Heart left ventricle (tissue), 16 donors: ENCODE measurements at regions of chr22 and their contacts with region 1.

Region 1: DNA sequence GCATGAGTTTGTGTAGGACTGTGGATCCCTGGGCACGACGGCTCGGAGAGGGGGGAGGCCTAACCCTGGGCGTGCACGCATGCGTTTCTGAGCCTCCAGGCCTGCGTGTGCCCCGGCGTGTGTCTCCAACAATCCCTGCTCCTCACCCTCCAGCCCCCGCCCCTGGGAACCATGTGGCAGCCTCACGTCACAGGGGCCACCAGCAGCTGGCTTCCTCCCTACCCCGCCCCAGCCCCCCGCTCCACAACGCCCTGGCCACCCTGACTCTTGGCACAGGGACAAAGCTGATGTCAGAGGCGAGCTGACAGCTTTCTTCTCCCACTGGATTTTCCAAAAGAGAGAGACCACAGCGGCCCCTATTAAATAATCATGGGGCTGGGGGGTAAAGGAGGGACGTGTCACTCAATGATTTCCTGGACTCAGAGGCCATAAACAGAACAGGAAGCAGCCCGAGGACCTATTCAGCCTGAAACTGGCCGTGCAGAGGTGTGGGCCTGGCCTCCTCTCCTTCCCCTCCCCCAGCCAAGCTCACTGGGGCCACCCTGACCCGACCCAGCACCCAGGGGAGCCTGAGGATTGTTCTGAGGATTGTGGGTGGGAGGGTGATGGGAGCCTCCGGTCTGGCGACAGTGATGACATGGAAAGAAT is 6.8 kb upstream of the LIF start:
- DNase-seq: peak; percentile 71 to 88 (median 81)
- ATAC-seq: peak in 3 of 4 donors; percentile 9 to 57 (median 44)
- H3K4me3 ChIP-seq: peak overlapping the region in 1 of 12 donors; percentile 2
- H3K27ac ChIP-seq: peak overlapping the region in 6 of 12 donors; percentile 10 to 70 (median 39)
- H3K4me1 ChIP-seq: peaks cover 0 to 52% (median 17%) of the 10 kb centered on the region in 12 donors
- H3K27me3 ChIP-seq: peaks cover 0 to 20% (median 4%) of the 10 kb centered on the region in 9 donors
- CTCF ChIP-seq: no peak
- POLR2A ChIP-seq: no peak

Region 2: DNA sequence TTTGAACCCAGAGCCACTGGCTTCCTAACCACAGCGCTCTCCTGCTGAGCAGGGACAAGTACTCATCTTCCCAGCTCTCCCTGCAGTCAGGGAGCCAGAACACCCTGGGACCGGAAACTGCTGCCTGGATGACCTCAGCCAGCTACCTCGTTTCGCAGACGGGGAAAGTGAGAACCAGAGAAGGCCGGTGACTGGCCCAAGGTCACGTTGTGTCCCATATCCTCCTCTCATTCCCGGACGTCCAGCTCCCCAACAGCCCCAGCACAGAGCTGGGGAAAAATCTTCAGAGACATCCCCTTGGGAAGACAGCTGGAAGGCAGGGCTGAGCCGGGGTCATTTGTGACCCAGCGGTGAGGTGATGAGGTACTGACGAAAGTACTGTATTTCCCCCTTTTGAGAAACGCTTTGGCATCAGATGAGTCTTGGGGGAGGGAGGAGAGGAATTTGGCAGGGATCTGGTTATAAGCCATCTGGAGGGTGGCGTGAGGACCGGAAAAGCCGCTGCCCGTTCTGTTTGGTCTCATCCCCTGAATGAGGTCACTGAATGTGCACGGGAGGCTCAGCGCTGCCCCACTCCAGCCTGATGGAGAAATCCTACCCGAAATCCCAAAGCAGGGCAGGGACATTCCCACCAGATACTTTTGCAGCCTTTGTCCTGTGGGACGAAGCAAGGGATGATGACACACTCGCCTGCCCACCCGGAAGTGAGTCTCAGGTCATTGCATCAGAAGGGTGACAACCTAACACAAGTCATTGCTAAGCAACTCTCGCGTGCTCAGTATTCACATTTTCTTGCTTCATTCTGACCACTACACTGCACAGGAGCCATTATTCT is 47.8 kb before region 1 on chr22:
- intact Hi-C with region 1: loop called in 5 of 10 experiments (anchors 5 kb)
- DNase-seq: peak in 4 of 5 donors; percentile 33 to 82 (median 64)
- ATAC-seq: peak; percentile 11 to 69 (median 64)
- H3K4me3 ChIP-seq: peak overlapping the region in 1 of 12 donors; percentile 19
- H3K27ac ChIP-seq: peak overlapping the region in 11 of 12 donors; percentile 18 to 89 (median 66)
- H3K4me1 ChIP-seq: peaks cover 0 to 59% (median 12%) of the 10 kb centered on the region in 12 donors
- H3K27me3 ChIP-seq: peaks cover 0 to 65% (median 7%) of the 10 kb centered on the region in 9 donors
- CTCF ChIP-seq: no peak
- POLR2A ChIP-seq: no peak